ENCODE measurements at regions of chr18 and their contacts with region 1.

Region 1: DNA sequence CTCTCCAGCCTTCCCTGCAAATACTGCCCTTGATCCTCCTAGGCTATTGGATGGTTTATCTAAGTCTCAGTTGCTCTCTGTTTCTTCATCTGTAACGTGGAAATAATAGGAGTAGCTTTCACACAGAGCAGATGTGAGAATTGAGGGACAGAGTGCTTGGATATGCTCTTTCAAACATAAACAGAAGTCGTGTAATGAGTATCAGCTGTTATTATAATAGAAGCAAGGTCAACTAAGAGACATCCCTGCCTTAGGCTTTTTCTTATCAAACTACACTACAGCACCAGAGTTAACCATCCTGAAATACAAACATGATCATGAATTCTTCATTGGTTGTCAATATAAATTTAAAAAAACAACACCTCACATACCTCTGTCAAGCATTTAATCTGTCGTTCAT is 138.2 kb downstream of the DOK6 start:
- DNase-seq: no peak
- ATAC-seq: no peak
- H3K4me3 ChIP-seq: no peak overlapping the region
- H3K27ac ChIP-seq: no peak overlapping the region
- H3K4me1 ChIP-seq: no peaks in the 10 kb centered on the region
- H3K27me3 ChIP-seq: no peaks in the 10 kb centered on the region
- CTCF ChIP-seq: no peak
- POLR2A ChIP-seq: no peak

Region 2: GRCh38 chr18:69300185-69300584 is 238.7 kb before region 1 on chr18:
- intact Hi-C with region 1: no loop called
- DNase-seq: no peak
- ATAC-seq: no peak
- H3K4me3 ChIP-seq: no peak overlapping the region
- H3K27ac ChIP-seq: no peak overlapping the region
- H3K4me1 ChIP-seq: no peaks in the 10 kb centered on the region
- H3K27me3 ChIP-seq: no peaks in the 10 kb centered on the region
- CTCF ChIP-seq: no peak
- POLR2A ChIP-seq: no peak

Region 3: DNA sequence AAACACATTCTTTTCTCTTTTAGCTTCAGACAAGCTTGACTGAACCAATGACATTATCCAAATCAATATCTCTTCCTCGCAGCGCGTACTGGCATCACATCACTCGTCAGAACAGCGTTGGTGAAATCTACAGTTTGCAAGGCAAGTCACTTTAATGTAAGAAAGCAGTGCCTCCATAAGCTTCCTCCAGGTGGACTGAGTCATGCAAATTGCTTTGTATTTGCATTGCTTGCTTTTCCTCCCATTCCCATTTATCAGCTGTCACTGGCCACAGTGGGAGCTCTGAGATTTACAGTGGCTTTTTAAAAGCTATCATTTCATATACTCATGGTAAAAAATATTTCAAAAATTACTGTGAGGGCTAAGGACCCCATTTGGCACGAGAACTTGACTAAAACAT is 218.9 kb after region 1 on chr18:
- intact Hi-C with region 1: loop called (anchors 10 kb)
- DNase-seq: no peak
- ATAC-seq: no peak
- H3K4me3 ChIP-seq: no peak overlapping the region
- H3K27ac ChIP-seq: no peak overlapping the region
- H3K4me1 ChIP-seq: peaks cover 4% of the 10 kb centered on the region
- H3K27me3 ChIP-seq: no peaks in the 10 kb centered on the region
- CTCF ChIP-seq: no peak
- POLR2A ChIP-seq: no peak

Measured in body of pancreas (tissue), 4 donors.